Cardiac septum (tissue), 1 donor: ENCODE measurements at regions of chr7 and their contacts with region 1.

Region 1: DNA sequence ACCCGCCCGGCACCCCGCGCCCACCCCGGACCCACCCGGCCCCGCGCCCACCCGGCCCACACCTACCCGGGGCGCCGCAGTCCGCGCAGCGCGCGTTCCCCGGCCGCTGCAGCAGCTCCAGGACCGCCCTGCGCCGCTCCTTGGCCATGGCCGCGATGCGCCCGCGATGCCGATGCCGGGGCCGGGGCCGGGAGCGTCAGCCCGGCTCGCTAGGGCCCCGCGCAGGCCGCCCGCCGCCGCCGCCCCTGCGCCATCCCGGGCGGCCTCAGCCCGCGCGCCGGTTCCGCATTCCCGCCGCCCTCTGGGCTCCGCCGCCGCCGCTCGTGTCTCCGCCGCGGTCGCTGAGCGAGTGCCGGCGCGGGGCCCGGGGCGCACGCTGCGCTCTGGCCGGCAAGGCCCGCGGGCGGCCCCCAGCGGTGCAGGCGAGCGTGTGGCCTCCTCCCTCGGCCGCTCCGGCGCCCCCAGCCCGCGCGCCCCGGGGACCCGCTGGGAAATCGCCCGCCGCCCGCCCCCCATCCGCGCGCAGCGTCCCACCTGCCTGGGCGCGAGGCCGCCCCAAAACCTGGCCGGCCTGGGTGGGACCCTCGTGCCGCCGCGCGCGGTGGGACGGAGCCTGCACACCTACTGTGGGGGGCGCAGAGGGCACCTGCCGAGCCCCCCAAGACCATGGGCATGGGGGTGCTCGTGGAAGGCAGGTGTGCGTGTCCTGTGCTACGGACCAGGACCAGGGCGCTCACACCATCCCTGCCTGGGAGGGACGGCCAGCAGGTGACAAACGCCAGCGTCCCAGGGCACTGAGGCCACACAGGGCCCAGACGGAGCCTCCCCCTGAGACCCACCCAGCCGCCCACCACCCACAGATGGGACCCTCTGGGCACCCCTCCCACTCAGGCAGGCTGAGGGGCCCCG is at the start of gene ADAP1:
- DNase-seq: no peak
- total RNA-seq, gene ADAP1: 12.5 TPM

Region 2: DNA sequence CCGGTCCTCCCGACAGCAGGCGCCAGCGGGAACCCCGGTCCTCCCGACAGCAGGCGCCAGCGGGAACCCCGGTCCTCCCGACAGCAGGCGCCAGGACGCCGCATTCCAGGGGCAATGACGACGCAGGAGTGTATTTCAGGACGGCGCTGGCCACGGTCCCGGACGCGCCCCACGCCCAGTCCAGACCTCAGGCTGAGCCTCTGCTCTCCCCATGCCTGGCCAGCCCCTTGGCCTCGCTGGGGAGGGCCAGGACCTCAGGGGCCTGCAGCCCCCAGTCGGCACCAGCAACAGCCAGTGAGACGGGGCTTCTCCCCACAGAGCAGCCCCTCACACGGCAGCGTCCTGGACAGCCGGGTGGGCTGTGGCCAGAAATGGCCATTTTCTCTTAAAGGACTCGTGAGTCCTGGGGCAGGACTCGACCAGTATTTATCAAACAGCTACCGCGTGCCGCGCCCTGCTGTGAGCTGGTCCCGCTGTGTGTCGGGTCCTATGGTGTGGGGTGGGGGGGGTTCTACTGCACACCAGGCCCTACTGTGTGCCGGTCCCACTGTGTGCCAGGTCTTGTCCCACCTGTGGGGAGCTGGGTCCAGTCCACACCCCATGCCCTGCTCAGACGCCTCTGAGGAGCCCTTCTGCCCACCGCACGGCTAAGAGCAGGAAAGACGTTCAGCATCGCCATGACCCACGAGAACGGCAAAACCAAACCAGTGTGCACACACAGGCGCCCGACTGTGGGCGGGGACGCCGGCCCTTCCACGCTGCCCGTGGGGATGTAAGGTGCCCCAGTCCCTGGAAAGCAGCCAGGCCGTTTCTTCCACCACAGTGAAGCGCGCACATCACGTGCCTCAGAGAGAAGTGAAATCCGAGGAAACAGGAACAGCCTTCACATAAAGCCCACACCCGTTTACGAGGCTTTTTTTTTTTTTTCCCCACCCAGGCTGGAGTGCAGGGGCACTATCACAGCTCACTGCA is 44.9 kb before region 1 on chr7:
- intact Hi-C with region 1: loop called (anchors 5 kb)
- DNase-seq: peak; percentile 91

Region 3: DNA sequence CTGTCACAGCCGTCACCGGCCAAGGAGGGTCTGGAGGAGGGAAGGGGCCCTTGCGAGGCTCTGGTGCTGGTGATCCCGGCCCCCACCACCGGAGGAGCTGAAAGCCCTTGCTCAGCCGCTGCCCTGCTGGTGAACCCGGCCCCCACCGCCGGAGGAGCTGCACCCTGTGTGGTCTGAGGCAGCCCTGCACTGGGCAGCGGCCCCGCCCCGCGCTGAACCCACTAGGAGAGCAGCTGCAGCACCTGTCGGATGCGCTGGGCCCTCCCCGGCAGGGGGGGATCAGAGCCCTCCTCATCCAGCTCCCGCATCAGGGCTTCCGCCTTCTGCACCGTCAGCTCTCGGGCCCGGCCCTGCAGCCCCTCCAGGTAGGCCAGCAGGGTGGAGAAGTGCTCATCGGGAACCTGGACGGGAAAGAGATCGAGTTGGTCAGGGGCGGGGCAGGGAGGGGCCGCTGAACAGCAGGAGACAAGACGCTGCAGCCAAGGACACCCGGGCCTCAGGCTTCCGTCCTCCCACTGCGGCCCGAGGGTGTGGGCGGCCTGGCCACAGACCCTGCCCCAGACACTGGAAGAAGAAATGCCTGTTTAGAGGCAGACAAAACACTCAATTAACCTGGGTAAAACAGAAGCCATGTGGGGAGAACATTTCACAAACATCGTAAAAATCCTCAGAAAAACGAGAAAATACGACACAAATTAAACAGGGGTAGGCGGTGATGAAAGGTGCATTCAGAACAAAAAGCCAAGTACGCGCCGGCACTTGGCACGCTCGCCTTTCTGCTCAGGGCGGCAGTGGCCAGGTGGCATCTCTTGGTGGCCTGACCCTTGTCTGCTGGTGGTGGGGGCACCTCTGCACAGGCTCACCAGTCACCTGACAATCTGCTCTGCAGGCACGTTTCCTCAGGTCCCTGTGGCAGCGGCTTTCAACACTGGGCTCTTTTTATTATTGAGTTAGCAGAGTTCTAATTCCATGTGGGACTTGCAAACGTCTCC is 43.1 kb after region 1 on chr7:
- intact Hi-C with region 1: no loop called
- DNase-seq: no peak